ENCODE measurements at regions of chr14 and their contacts with region 1.

Region 1: GRCh38 chr14:99266181-99267178 is 5.5 kb downstream of the BCL11B start:
- DNase-seq: peak; percentile 79 to 95 (median 88)
- ATAC-seq: peak; percentile 25 to 42 (median 40)
- H3K4me3 ChIP-seq: peak overlapping the region; percentile 66 to 90
- H3K4me3 Mint-ChIP-seq: peak overlapping the region; percentile 94 to 98 (median 96)
- H3K27ac ChIP-seq: peak overlapping the region; percentile 99
- H3K27ac Mint-ChIP-seq: peak overlapping the region; percentile 99 to 100
- H3K4me1 ChIP-seq: peaks cover 33 to 54% of the 10 kb centered on the region in 2 experiments
- H3K4me1 Mint-ChIP-seq: peaks cover 60 to 72% (median 62%) of the 10 kb centered on the region in 3 donors
- H3K27me3 ChIP-seq: no peaks in the 10 kb centered on the region
- H3K27me3 Mint-ChIP-seq: no peaks in the 10 kb centered on the region

Region 2: GRCh38 chr14:97634751-97635150 is 1631.7 kb before region 1 on chr14:
- CTCF ChIA-PET with region 1: no interaction called
- POLR2A ChIA-PET with region 1: interaction called in 1 of 2 experiments, 16 read pairs
- DNase-seq: peak in 34 of 35 experiments; percentile 10 to 62 (median 38)
- ATAC-seq: peak; percentile 40 to 95 (median 52)
- H3K4me3 ChIP-seq: peak overlapping the region in 1 of 2 donors; percentile 43
- H3K4me3 Mint-ChIP-seq: peak overlapping the region; percentile 82 to 89 (median 83)
- H3K27ac ChIP-seq: peak overlapping the region; percentile 31
- H3K27ac Mint-ChIP-seq: peak overlapping the region; percentile 87 to 90
- H3K4me1 ChIP-seq: peaks cover 10 to 11% of the 10 kb centered on the region in 2 experiments
- H3K4me1 Mint-ChIP-seq: peaks cover 53 to 63% (median 59%) of the 10 kb centered on the region in 3 donors
- H3K27me3 ChIP-seq: no peaks in the 10 kb centered on the region
- H3K27me3 Mint-ChIP-seq: no peaks in the 10 kb centered on the region

Region 3: GRCh38 chr14:99192028-99192621 is 74.4 kb before region 1 on chr14:
- CTCF ChIA-PET with region 1: interaction called, 4 to 18 read pairs
- POLR2A ChIA-PET with region 1: interaction called in 1 of 2 experiments, 5 read pairs
- DNase-seq: peak in 25 of 35 experiments; percentile 18 to 70 (median 37)
- ATAC-seq: peak; percentile 14 to 33 (median 20)
- H3K4me3 ChIP-seq: peak overlapping the region; percentile 42 to 62
- H3K4me3 Mint-ChIP-seq: peak overlapping the region; percentile 85 to 90 (median 89)
- H3K27ac ChIP-seq: peak overlapping the region; percentile 87
- H3K27ac Mint-ChIP-seq: peak overlapping the region; percentile 97 to 99
- H3K4me1 ChIP-seq: peaks cover 66 to 99% of the 10 kb centered on the region in 2 experiments
- H3K4me1 Mint-ChIP-seq: peaks cover 94 to 100% (median 95%) of the 10 kb centered on the region in 3 donors
- H3K27me3 ChIP-seq: no peaks in the 10 kb centered on the region
- H3K27me3 Mint-ChIP-seq: no peaks in the 10 kb centered on the region

Region 4: GRCh38 chr14:99230208-99231151 is 36.0 kb before region 1 on chr14:
- CTCF ChIA-PET with region 1: interaction called, 8 to 75 read pairs
- POLR2A ChIA-PET with region 1: interaction called, 6 to 15 read pairs
- DNase-seq: peak; percentile 58 to 91 (median 84)
- ATAC-seq: peak; percentile 63 to 71 (median 68)
- H3K4me3 ChIP-seq: peak overlapping the region in 1 of 2 donors; percentile 29
- H3K4me3 Mint-ChIP-seq: peak overlapping the region; percentile 62 to 96 (median 76)
- H3K27ac ChIP-seq: peak overlapping the region; percentile 99
- H3K27ac Mint-ChIP-seq: peak overlapping the region; percentile 98 to 99
- H3K4me1 ChIP-seq: peaks cover 80 to 100% of the 10 kb centered on the region in 2 experiments
- H3K4me1 Mint-ChIP-seq: peaks cover 94 to 96% (median 95%) of the 10 kb centered on the region in 3 donors
- H3K27me3 ChIP-seq: no peaks in the 10 kb centered on the region
- H3K27me3 Mint-ChIP-seq: no peaks in the 10 kb centered on the region

Region 5: DNA sequence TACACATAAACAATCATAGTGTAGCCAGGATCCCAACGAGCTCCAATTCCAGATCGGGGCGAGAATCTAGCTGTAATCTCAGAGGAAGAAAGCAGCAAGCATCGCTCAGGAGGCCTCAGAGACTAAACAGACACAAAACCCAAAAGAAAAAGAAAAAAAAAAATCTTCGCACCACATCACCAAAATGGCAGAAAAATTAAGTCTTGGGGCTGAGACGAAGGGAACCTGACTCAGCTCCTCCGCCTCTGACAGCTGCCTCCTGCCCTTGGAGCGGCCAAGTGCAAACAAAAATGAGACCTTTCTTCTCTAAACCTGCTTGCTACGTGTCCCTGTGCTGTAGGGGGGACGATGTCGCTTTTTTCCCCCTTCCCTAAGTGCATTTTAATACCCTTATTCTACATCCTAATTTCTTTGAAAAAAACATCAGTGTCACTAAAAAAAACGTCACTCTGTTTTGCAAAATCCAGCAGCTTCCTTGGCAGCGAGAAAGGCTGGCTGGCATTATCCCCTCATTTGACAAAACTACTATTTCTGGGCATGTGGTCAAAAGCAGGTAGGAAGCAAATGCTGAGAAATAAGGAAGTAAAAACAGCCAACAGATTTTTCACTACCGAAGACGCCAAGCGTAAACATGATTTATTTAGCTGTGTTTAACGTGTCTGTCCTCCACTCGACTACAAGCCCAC is 25.0 kb before region 1 on chr14:
- CTCF ChIA-PET with region 1: interaction called, 8 to 75 read pairs
- POLR2A ChIA-PET with region 1: interaction called, 10 to 40 read pairs
- DNase-seq: peak in 9 of 35 experiments; percentile 44 to 75 (median 58)
- ATAC-seq: peak; percentile 24 to 41 (median 35)
- H3K4me3 ChIP-seq: peak overlapping the region; percentile 38 to 47
- H3K4me3 Mint-ChIP-seq: peak overlapping the region; percentile 85 to 96 (median 88)
- H3K27ac ChIP-seq: peak overlapping the region; percentile 99
- H3K27ac Mint-ChIP-seq: peak overlapping the region; percentile 98
- H3K4me1 ChIP-seq: peaks cover 82 to 93% of the 10 kb centered on the region in 2 experiments
- H3K4me1 Mint-ChIP-seq: peaks cover 86 to 88% (median 88%) of the 10 kb centered on the region in 3 donors
- H3K27me3 ChIP-seq: no peaks in the 10 kb centered on the region
- H3K27me3 Mint-ChIP-seq: no peaks in the 10 kb centered on the region

Region 6: DNA sequence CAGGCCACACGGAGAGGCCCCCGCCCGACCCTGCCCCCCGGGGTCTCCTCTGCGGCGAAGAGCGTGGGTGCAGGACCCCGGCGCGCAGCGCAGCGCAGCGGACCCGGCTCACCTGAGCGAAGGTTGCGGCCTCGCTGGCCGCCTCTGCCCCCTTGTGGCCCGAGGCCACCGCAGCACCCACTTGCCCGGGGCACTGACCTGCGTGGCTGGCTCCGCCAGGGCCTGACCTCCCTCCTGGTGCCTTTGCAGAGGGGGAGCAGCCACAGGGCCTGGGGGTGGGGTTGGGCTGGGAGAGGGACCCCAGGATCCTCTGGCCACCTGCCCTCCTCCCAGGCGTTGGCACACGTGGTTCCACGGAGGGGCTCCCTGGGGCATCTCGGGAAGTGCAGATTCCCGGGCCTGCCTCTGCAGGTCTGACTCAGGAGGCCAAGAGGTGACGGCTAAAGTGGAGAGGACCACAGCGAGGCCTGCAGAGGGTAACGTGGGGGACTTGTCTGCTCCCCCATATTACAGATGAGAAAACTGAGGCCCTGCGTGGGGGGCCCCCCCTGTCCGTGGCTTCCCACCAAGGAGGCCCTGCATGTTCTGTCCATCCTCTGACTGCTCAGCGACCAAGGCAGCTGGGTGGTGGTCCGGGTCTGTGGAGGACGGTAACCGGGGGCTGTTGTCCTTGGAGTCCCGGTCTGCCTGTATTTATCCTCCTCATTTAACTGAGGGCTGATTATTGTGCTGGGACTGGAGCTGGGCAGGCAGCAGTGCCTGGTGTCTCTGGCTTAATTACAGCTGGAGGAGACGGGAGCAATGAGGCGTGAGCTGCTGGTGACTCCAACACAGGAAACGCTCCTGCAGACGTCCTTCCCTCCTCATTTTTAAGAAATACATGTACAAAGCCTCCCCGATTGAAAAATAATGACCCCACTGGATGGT is 1388.6 kb after region 1 on chr14:
- CTCF ChIA-PET with region 1: no interaction called
- POLR2A ChIA-PET with region 1: no interaction called
- DNase-seq: peak in 28 of 35 experiments; percentile 5 to 71 (median 28)
- ATAC-seq: peak; percentile 74 to 86 (median 83)
- H3K4me3 ChIP-seq: no peak overlapping the region
- H3K4me3 Mint-ChIP-seq: no peak overlapping the region
- H3K27ac ChIP-seq: no peak overlapping the region
- H3K27ac Mint-ChIP-seq: no peak overlapping the region
- H3K4me1 ChIP-seq: peaks cover 0 to 27% of the 10 kb centered on the region in 2 experiments
- H3K4me1 Mint-ChIP-seq: peaks cover 6 to 8% (median 7%) of the 10 kb centered on the region in 3 donors
- H3K27me3 ChIP-seq: peaks cover 0 to 53% of the 10 kb centered on the region in 2 experiments
- H3K27me3 Mint-ChIP-seq: peaks cover 11 to 21% of the 10 kb centered on the region in 2 donors

Measured in T-cell (primary cell).